T-cell (primary cell): ENCODE measurements at regions of chr12 and their contacts with region 1.

Region 1: GRCh38 chr12:13211859-13212664 is 15.5 kb downstream of the EMP1 start:
- DNase-seq: peak; percentile 36 to 87 (median 65)
- ATAC-seq: peak; percentile 62 to 77 (median 72)
- H3K4me3 ChIP-seq: no peak overlapping the region
- H3K4me3 Mint-ChIP-seq: no peak overlapping the region
- H3K27ac ChIP-seq: no peak overlapping the region
- H3K27ac Mint-ChIP-seq: peak overlapping the region in 1 of 2 donors; percentile 63
- H3K4me1 ChIP-seq: peaks cover 0 to 7% of the 10 kb centered on the region in 2 experiments
- H3K4me1 Mint-ChIP-seq: peaks cover 6 to 11% (median 8%) of the 10 kb centered on the region in 3 donors
- H3K27me3 ChIP-seq: no peaks in the 10 kb centered on the region
- H3K27me3 Mint-ChIP-seq: peaks cover 0 to 4% of the 10 kb centered on the region in 2 donors

Region 2: GRCh38 chr12:12837025-12837872 is 374.8 kb before region 1 on chr12:
- CTCF ChIA-PET with region 1: interaction called in 1 of 2 experiments, 14 read pairs
- POLR2A ChIA-PET with region 1: no interaction called
- DNase-seq: peak in 16 of 35 experiments; percentile 1 to 63 (median 11)
- ATAC-seq: peak; percentile 63 to 75 (median 71)
- H3K4me3 ChIP-seq: no peak overlapping the region
- H3K4me3 Mint-ChIP-seq: peak overlapping the region in 1 of 3 donors; percentile 8
- H3K27ac ChIP-seq: no peak overlapping the region
- H3K27ac Mint-ChIP-seq: peak overlapping the region; percentile 57 to 83
- H3K4me1 ChIP-seq: peaks cover 9 to 16% of the 10 kb centered on the region in 2 experiments
- H3K4me1 Mint-ChIP-seq: peaks cover 26 to 33% (median 28%) of the 10 kb centered on the region in 3 donors
- H3K27me3 ChIP-seq: no peaks in the 10 kb centered on the region
- H3K27me3 Mint-ChIP-seq: no peaks in the 10 kb centered on the region

Region 3: DNA sequence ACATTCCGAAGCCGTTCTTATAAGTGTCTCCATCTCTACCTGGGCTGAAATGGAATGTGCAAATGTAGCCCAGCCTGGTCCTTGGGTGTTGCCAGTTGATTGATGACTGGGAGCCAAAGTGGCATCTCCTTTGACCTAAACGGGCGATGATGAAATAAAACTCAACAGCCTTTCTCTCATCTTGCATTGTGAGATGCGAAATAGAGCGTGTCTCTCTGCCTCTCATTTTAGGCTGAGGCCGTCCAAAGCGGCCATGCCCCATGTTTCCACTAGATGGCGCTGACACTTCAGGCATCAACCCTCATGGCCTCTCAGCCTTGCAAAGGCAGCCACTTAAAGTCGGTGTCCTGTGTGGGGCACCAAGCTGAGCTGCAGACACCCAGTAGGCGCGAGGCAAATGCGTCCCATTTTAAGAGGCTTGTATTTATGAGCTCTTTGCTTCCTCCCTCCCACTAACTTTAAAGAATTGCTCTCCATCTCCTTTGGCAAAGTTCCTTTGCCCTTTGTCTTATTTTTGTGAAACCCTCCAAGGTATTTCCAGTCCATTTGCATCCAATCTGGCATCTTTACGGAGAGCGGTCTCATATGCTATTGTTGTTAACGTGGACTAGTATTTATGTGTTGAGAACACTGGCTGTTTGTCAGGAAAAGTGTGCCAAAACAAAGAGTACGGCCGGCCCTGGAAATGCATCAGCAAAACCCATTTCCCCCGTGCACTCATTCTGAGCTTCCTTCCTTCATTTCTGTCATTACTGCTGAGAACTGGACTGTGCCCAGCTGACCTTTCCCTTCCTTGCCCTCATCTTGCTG is 295.7 kb before region 1 on chr12:
- CTCF ChIA-PET with region 1: interaction called, 34 to 47 read pairs
- POLR2A ChIA-PET with region 1: no interaction called
- DNase-seq: peak; percentile 55 to 89 (median 78)
- ATAC-seq: peak; percentile 98 to 99 (median 98)
- H3K4me3 ChIP-seq: no peak overlapping the region
- H3K4me3 Mint-ChIP-seq: peak overlapping the region in 1 of 3 donors; percentile 57
- H3K27ac ChIP-seq: no peak overlapping the region
- H3K27ac Mint-ChIP-seq: no peak overlapping the region
- H3K4me1 ChIP-seq: peaks cover 0 to 8% of the 10 kb centered on the region in 2 experiments
- H3K4me1 Mint-ChIP-seq: peaks cover 9 to 11% (median 10%) of the 10 kb centered on the region in 3 donors
- H3K27me3 ChIP-seq: peaks cover 0 to 4% of the 10 kb centered on the region in 2 experiments
- H3K27me3 Mint-ChIP-seq: peaks cover 9 to 10% of the 10 kb centered on the region in 2 donors

Region 4: DNA sequence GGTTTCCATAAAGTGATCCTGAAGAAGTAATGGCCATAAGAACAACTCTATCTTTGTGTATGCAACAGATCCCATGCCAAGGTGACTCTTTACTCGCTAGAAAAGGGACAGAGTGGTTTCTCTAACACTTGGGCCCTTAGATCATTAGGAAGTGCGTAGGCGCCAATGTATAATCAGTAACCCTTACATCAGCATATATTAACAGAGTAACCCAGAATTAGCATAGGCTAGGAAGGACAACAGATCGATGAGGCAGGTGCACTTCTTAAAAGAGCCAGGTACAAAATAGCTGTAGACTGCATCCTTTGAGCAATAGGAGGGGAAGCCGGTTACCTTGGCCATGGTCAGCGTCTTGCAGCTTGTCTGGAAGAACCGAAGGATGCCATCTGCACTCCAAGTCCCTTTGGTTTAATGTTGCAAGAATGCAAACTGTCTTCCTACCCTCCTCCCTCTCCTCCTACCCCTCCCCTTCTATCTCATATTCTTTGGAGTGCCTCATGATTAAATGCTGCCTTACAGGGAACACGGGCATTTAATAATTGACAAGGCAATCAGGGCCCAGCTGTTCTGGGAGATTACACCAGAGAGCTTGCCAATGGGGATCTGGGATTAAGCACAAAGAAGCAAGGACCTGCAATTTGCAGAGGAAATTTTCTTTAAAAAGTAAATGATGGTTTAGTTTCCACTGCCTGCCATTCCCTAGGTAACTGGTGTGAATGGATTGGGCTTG is 116.6 kb before region 1 on chr12:
- CTCF ChIA-PET with region 1: interaction called, 23 to 52 read pairs
- POLR2A ChIA-PET with region 1: interaction called, 3 to 5 read pairs
- DNase-seq: no peak
- ATAC-seq: no peak
- H3K4me3 ChIP-seq: no peak overlapping the region
- H3K4me3 Mint-ChIP-seq: no peak overlapping the region
- H3K27ac ChIP-seq: no peak overlapping the region
- H3K27ac Mint-ChIP-seq: no peak overlapping the region
- H3K4me1 ChIP-seq: peaks cover 12 to 23% of the 10 kb centered on the region in 2 experiments
- H3K4me1 Mint-ChIP-seq: peaks cover 24 to 26% (median 26%) of the 10 kb centered on the region in 3 donors
- H3K27me3 ChIP-seq: peaks cover 0 to 4% of the 10 kb centered on the region in 2 experiments
- H3K27me3 Mint-ChIP-seq: no peaks in the 10 kb centered on the region

Region 5: DNA sequence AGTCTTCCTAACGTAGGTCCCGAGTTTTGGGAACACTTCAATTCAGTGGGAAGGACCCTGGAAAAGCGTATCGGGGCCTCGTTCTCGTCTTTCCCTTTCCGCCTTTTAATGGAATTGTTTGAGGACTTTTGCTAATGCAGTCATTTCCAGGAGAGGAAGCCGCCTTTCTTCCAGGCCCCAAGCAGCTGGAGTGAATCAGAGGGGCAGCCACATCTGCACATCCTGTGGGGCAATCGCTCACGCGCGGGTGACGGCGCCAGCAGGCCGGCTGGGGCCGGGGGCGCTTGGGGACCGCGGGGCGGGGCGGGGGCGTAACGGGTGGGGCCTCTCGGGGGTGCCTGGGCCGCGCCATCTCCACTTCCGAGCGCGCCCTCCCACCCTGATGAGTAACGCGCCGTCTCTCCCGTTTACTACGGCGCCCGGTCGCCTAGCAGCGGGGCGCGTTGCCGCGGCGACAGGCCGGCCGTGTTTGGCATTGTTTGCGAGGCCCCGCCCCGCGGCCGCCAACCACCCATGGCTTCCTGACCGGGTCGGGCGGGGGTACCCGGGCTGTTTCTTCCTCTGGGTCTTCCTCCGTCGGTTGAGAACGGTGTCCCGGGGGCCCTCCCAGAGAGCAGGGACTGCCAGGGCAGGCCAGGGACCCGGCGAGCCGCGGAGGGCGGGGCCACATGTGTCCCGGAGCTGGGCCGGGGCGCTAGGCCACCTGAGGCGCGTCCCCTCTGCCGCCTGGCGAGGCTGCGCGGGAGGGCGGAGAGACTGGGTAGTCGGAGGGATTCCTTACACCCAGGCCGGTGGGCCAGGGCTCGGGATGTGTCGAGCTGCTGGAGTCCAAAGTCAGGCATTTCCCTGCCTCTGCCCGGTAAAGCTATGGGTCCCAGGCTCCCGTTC is 110.9 kb before region 1 on chr12:
- CTCF ChIA-PET with region 1: interaction called, 23 to 52 read pairs
- POLR2A ChIA-PET with region 1: interaction called, 3 to 5 read pairs
- DNase-seq: peak; percentile 83 to 96 (median 93)
- ATAC-seq: peak; percentile 89 to 92 (median 92)
- H3K4me3 ChIP-seq: peak overlapping the region; percentile 55 to 66
- H3K4me3 Mint-ChIP-seq: peak overlapping the region; percentile 70 to 81 (median 80)
- H3K27ac ChIP-seq: peak overlapping the region; percentile 93
- H3K27ac Mint-ChIP-seq: peak overlapping the region; percentile 90 to 91
- H3K4me1 ChIP-seq: peaks cover 18 to 37% of the 10 kb centered on the region in 2 experiments
- H3K4me1 Mint-ChIP-seq: peaks cover 41 to 51% (median 50%) of the 10 kb centered on the region in 3 donors
- H3K27me3 ChIP-seq: no peaks in the 10 kb centered on the region
- H3K27me3 Mint-ChIP-seq: no peaks in the 10 kb centered on the region

Region 6: GRCh38 chr12:13165617-13166041 is 46.4 kb before region 1 on chr12:
- CTCF ChIA-PET with region 1: no interaction called
- POLR2A ChIA-PET with region 1: no interaction called
- DNase-seq: peak in 34 of 35 experiments; percentile 11 to 71 (median 36)
- ATAC-seq: peak; percentile 80 to 97 (median 90)
- H3K4me3 ChIP-seq: peak overlapping the region in 1 of 2 donors; percentile 3
- H3K4me3 Mint-ChIP-seq: peak overlapping the region in 1 of 3 donors; percentile 20
- H3K27ac ChIP-seq: peak overlapping the region; percentile 40
- H3K27ac Mint-ChIP-seq: peak overlapping the region; percentile 84 to 88
- H3K4me1 ChIP-seq: peaks cover 17 to 21% of the 10 kb centered on the region in 2 experiments
- H3K4me1 Mint-ChIP-seq: peaks cover 23 to 25% (median 25%) of the 10 kb centered on the region in 3 donors
- H3K27me3 ChIP-seq: peaks cover 0 to 3% of the 10 kb centered on the region in 2 experiments
- H3K27me3 Mint-ChIP-seq: peaks cover 0 to 4% of the 10 kb centered on the region in 2 donors

Region 7: DNA sequence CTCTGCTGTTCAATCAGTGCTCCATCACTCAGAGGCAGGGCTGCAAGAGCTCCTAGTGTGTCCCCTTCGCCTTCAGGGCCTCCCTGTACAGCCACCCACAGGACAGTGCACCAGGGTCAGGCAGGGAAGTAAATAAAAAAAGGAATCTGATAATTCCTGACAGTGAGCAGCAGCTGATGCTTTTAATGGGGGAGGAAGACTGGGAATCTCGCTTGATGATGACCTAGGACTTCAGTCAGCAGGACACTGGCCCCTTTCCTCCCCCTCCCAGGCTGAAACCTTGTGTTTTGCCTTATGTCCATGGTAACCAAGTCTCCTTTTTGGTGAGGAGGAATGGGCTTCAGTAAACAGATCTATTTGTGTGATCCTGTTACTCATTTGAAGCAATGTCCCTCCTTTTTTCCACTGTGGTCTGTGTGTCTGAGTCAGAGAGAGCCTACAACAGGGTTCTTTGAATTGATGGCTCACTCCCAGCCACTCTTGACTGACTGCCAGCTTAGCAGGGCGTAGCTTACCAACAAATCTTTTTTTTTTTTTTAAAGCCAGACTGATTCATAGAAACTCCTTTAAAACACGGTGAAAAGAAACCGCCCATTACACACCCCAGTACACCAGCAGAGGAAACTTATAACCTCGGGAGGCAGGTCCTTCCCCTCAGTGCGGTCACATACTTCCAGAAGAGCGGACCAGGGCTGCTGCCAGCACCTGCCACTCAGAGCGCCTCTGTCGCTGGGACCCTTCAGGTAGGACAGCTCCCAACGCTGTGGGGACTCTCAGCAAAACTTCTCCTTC is 15.7 kb before region 1 on chr12 and contains the start of gene EMP1:
- CTCF ChIA-PET with region 1: interaction called, 4 to 12 read pairs
- POLR2A ChIA-PET with region 1: interaction called, 3 read pairs
- DNase-seq: peak in 34 of 35 experiments; percentile 19 to 71 (median 42)
- ATAC-seq: peak; percentile 90 to 98 (median 96)
- H3K4me3 ChIP-seq: peak within 1 kb of the TSS; percentile 34 to 62
- H3K4me3 Mint-ChIP-seq: peak within 1 kb of the TSS; percentile 75 to 82 (median 75)
- H3K27ac ChIP-seq: peak within 1 kb of the TSS; percentile 25
- H3K27ac Mint-ChIP-seq: peak within 1 kb of the TSS; percentile 58 to 75
- H3K4me1 ChIP-seq: peaks cover 5 to 16% of the 10 kb centered on the region in 2 experiments
- H3K4me1 Mint-ChIP-seq: peaks cover 24 to 35% (median 33%) of the 10 kb centered on the region in 3 donors
- H3K27me3 ChIP-seq: no peaks in the 10 kb centered on the region
- H3K27me3 Mint-ChIP-seq: peaks cover 0 to 2% of the 10 kb centered on the region in 2 donors
- total RNA-seq, gene EMP1: 1.4 to 5.4 (median 2.8) TPM